Left ventricle myocardium superior (tissue), 1 donor: ENCODE measurements at regions of chr13 and their contacts with region 1.

Region 1: DNA sequence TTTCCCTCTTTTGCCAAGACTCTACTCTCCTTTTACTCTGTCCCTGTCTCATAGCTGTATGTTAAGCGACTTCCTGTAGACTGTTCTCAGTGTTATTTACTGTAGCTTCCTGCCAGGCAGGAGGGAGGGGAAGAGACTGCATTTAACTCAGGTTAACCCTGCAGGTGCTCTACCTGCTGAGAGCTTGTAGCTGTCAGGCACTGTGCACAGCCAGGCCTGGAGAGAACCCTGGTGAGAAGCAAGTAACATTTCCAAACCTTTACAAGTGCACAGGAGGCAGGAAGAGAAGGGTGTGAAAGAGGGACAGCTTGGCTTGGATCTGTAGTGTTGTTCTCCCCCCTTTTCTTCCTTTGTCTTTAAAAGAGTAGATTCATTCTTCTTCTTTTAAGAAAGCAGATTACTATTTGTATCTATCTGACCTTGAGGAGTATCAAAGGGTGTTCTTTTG is 167.1 kb downstream of the LMO7 start:
- DNase-seq: no peak
- ATAC-seq: peak; percentile 47

Region 2: DNA sequence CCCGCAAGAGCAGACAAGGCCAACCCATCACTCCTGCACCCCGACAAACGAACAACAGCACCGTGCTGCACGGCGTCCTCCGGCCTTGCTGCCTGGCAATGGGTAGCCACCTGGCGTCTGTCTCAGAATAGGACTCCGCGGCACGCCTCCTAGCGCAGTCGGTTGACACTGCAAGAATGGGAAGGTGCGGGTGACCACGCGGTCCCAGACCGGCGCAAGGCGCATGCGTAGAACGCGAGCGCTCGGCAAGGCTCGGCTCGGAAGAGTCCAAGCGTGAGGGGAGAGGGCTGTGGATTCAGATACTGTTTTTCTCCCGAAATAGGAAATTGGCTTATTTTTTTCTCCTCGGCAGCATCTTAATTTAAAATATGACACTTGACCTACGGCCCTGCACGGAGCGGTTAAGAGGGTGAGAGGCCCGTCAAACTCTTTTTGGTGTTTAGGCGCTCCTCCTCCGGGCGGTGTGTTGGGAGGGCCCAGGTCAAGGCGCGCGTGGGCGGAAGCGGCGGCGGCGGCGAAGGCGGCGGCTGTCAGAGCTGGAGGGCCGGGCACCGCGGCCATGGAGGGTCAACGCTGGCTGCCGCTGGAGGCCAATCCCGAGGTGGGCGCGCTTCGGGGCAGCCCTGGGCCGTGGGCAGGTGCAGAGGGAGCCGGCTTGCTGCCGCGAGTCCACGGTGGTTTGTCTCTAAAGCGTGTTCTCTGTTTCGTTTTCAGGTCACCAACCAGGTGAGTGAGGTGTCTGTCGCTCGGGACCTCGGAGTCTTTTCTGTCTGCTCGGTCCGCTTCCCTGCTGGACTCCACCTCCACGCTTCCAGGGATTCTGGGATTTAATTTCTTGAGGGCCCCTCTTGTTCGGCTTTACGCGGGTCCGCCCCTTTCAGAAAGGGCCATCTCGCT is 253.7 kb before region 1 on chr13 and contains the start of gene UCHL3:
- intact Hi-C with region 1: no loop called
- DNase-seq: peak; percentile 99
- ATAC-seq: peak; percentile 98
- total RNA-seq, gene UCHL3: 23.7 TPM

Region 3: GRCh38 chr13:75691183-75691582 is 112.0 kb before region 1 on chr13:
- intact Hi-C with region 1: loop called (anchors 10 kb)
- DNase-seq: no peak
- ATAC-seq: no peak

Region 4: GRCh38 chr13:75760131-75761021 is 42.8 kb before region 1 on chr13:
- intact Hi-C with region 1: loop called (anchors 5 kb)
- DNase-seq: no peak
- ATAC-seq: peak; percentile 85